ENCODE measurements at regions of chr3 and their contacts with region 1.

Region 1: DNA sequence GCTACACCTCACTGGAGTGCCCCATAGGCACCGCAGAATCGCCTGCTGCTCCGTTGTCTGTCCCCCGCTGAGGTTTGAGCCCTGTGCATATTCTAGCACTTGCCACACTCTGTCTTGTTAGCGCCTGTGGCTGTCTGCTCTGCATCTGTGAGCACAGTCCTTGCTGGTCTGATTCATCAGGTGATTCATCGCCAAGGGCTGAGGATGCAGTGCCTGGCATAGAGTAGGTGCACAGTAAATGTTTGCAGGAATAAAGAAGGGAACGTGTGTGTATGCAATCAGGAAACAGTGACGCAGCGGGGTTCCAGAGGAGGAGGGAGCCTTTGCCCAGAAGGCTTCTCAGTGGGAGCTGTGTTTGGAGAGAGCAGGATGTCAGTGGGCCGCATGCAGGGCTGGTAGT is 124.0 kb upstream of the PLXNA1 start:
- DNase-seq: no peak
- ATAC-seq: no peak
- H3K4me3 Mint-ChIP-seq: no peak overlapping the region
- H3K27ac Mint-ChIP-seq: no peak overlapping the region
- H3K4me1 Mint-ChIP-seq: no peaks in the 10 kb centered on the region
- H3K27me3 Mint-ChIP-seq: no peaks in the 10 kb centered on the region
- CTCF ChIP-seq: no peak

Region 2: GRCh38 chr3:126731044-126731443 is 127.8 kb before region 1 on chr3:
- CTCF ChIA-PET with region 1: no interaction called
- POLR2A ChIA-PET with region 1: no interaction called
- intact Hi-C with region 1: no loop called
- DNase-seq: no peak
- ATAC-seq: no peak
- H3K4me3 Mint-ChIP-seq: no peak overlapping the region
- H3K27ac Mint-ChIP-seq: no peak overlapping the region
- H3K4me1 Mint-ChIP-seq: peaks cover 11% of the 10 kb centered on the region
- H3K27me3 Mint-ChIP-seq: no peaks in the 10 kb centered on the region
- CTCF ChIP-seq: no peak

Region 3: DNA sequence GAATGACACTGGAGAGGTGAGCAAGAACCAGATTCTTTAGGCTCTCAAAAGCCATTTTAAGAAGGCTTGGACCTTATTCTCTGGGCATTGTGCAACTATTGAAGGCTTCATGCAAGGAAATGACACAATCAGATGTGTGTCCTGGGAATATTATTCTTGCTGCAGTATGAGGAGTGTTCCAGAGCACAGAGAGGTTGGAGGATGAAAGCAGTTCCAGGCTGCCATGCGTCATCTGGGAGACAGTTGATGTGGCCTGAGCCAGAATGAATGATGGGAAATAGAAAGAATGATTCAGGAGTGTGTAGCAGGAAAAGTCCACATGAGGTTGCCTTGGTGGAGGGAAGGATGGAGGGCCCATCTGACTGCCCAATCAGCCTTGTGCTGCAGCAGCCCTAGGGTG is 31.8 kb before region 1 on chr3:
- CTCF ChIA-PET with region 1: no interaction called
- POLR2A ChIA-PET with region 1: no interaction called
- intact Hi-C with region 1: no loop called
- DNase-seq: no peak
- ATAC-seq: no peak
- H3K4me3 Mint-ChIP-seq: no peak overlapping the region
- H3K27ac Mint-ChIP-seq: no peak overlapping the region
- H3K4me1 Mint-ChIP-seq: no peaks in the 10 kb centered on the region
- H3K27me3 Mint-ChIP-seq: no peaks in the 10 kb centered on the region
- CTCF ChIP-seq: no peak

Region 4: DNA sequence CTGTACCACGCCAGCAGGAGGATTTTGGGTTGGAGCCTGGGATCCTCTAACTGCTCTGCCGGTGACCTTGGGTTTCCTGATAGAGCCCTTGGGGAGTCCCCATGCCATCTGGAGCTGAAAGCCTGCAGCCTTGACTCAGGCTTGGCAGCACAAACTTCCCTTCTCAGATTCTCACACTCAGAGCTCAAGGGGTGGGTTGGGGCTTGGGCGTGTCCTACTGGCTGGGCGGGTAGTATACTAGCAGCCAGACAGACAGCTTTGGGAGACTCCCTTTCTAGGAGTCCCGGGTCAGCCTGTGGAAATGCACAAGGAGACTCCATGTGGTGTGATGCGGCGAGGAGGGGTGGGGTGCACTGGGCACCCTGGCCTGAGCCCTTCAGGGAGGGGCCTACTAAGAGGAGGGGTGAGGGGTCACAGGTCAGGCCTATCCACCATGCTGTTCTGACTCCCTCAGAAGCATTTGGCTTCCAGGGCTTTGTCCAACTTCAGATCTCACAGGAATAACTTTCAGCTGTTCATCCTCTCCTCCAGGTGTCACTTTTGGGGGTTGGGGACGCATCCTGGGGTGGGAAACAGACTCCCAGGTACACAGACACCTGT is 102.4 kb after region 1 on chr3:
- CTCF ChIA-PET with region 1: no interaction called
- POLR2A ChIA-PET with region 1: no interaction called
- intact Hi-C with region 1: loop called (anchors 10 kb)
- DNase-seq: no peak
- ATAC-seq: peak; percentile 97
- H3K4me3 Mint-ChIP-seq: no peak overlapping the region
- H3K27ac Mint-ChIP-seq: peak overlapping the region; percentile 24
- H3K4me1 Mint-ChIP-seq: peaks cover 22% of the 10 kb centered on the region
- H3K27me3 Mint-ChIP-seq: no peaks in the 10 kb centered on the region
- CTCF ChIP-seq: no peak

Measured in activated B cell treated with CpG ODN at 0.5 μM for 24 hours (primary cell).